ENCODE measurements at regions of chr13 and their contacts with region 1.

Region 1: GRCh38 chr13:32586080-32586900 is at the start of gene PDS5B:
- DNase-seq: peak; percentile 66
- ATAC-seq: peak; percentile 90
- H3K4me3 ChIP-seq: peak within 1 kb of the TSS; percentile 75
- H3K27ac ChIP-seq: peak within 1 kb of the TSS; percentile 84
- H3K4me1 ChIP-seq: peaks cover 4% of the 10 kb centered on the region; the same call in 1 of the 2 replicates
- H3K27me3 ChIP-seq: no peaks in the 10 kb centered on the region
- CTCF ChIP-seq: peak; percentile 68 to 96 (median 69); a peak in 4 of 6 replicates
- EP300 ChIP-seq: no peak
- POLR2A ChIP-seq: peak; percentile 71
- RAD21 ChIP-seq: peak; percentile 82
- polyA plus RNA-seq, gene PDS5B: 15.4 to 16.0 TPM

Region 2: DNA sequence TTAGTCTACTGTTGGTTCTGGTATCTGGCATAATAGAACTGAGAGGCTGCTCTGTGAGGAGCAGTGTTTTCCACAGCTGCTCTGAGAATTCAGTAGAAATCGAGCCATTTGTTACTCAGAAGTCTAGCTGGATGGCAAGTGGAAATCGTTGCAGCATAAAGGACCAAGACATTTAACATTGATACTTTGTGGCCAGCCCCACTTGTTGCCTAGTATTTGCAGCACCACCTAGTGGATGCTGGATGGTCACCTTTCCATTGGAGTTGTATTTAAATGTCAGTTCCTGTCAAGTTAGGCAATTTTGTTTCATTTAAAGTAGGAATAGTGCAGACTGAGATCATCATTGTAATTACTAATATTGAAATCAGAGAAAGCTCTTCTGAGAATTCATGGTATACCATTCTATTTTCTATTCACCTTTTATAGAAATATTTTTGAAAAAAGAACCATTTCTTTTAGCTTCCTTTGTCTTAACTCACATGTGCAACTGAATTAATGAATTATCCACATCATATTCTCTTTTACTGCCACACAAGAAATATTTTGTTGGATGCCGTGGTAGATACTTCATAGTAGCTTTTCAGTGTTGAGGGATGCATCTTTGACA is 64.5 kb after region 1 on chr13:
- CTCF ChIA-PET with region 1: interaction called, 171 read pairs
- POLR2A ChIA-PET with region 1: interaction called, 11 read pairs
- RAD21 ChIA-PET with region 1: interaction called, 112 read pairs
- SMC1A ChIA-PET with region 1: interaction called, 111 read pairs
- in situ Hi-C with region 1: no loop called
- intact Hi-C with region 1: loop called (anchors 1 kb)
- DNase-seq: peak; percentile 30
- ATAC-seq: peak; percentile 84
- H3K4me3 ChIP-seq: no peak overlapping the region
- H3K27ac ChIP-seq: no peak overlapping the region; the same call in 1 of the 2 replicates
- H3K4me1 ChIP-seq: peaks cover 20% of the 10 kb centered on the region
- H3K27me3 ChIP-seq: no peaks in the 10 kb centered on the region
- CTCF ChIP-seq: peak; percentile 78 to 88 (median 83)
- EP300 ChIP-seq: no peak
- POLR2A ChIP-seq: no peak
- RAD21 ChIP-seq: peak; percentile 71

Region 3: DNA sequence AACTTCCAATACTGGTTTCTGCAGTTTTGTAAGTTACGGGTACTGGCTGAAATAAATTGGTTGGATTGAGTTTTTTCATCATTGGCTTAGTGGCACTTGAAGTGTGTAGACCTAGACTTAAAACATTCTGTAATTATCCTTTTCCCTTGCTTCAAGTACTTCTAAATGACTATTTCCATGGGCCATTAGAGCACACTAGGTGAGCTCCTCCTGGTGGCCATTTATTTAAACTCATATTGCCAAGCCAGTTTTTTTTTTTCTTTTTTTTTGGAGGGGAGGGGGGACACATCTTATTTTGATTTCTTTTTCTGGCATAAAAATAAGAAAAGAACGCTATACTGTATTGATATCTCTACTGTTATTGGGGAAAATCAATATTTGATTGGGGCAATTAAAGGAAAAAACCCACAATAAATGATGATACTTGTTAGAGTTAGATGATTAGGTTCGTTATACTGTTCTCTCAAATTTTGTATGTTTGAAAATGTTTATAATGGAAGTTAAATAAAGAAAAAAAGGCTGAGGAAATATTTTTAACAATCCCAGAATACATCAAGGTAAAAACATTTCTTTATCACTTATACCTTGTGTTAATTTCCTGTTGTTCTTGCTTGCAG is 82.8 kb after region 1 on chr13:
- CTCF ChIA-PET with region 1: interaction called, 54 read pairs
- POLR2A ChIA-PET with region 1: no interaction called
- RAD21 ChIA-PET with region 1: interaction called, 30 read pairs
- SMC1A ChIA-PET with region 1: interaction called, 47 read pairs
- in situ Hi-C with region 1: no loop called
- intact Hi-C with region 1: loop called (anchors 1 kb)
- DNase-seq: no peak
- ATAC-seq: peak; percentile 78
- H3K4me3 ChIP-seq: no peak overlapping the region
- H3K27ac ChIP-seq: no peak overlapping the region
- H3K4me1 ChIP-seq: no peaks in the 10 kb centered on the region
- H3K27me3 ChIP-seq: no peaks in the 10 kb centered on the region
- CTCF ChIP-seq: peak; percentile 57 to 65 (median 58); a peak in 5 of 6 replicates
- EP300 ChIP-seq: no peak
- POLR2A ChIP-seq: no peak
- RAD21 ChIP-seq: peak; percentile 68

Region 4: DNA sequence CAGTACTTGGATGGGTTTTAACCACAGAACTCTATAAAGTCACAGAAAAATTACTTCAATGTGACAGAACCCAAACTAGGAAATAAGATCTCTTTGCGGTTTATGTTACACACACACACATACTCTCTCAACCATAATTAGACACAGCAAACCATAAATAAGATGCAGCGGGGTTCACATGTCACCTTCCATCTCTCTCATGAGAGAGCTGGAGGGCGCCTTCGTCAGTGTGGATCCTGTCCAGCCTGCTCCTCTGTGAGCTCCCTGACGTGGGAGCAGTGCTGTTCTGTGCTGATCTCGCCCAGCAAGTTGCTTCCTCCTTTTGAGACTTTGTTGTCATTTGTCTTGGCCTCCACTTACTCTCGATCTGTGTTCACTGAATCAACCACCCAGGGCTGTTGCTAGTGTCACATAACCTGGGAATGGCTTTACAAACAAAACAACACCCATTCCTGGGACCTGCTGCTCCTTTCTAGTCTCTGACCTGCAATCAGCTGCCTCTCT is 225.1 kb after region 1 on chr13:
- CTCF ChIA-PET with region 1: no interaction called
- POLR2A ChIA-PET with region 1: no interaction called
- RAD21 ChIA-PET with region 1: no interaction called
- SMC1A ChIA-PET with region 1: interaction called, 4 read pairs
- in situ Hi-C with region 1: no loop called
- intact Hi-C with region 1: loop called (anchors 10 kb)
- DNase-seq: peak; percentile 62
- ATAC-seq: peak; percentile 95
- H3K4me3 ChIP-seq: no peak overlapping the region
- H3K27ac ChIP-seq: peak overlapping the region; percentile 62
- H3K4me1 ChIP-seq: peaks cover 14% of the 10 kb centered on the region
- H3K27me3 ChIP-seq: no peaks in the 10 kb centered on the region
- CTCF ChIP-seq: no peak
- EP300 ChIP-seq: peak in 1 of 2 experiments; percentile 43; a peak in 1 of 4 replicates
- POLR2A ChIP-seq: peak; percentile 61
- RAD21 ChIP-seq: no peak

Region 5: GRCh38 chr13:33017323-33017929 is 431.1 kb after region 1 on chr13:
- CTCF ChIA-PET with region 1: interaction called, 8 read pairs
- POLR2A ChIA-PET with region 1: no interaction called
- RAD21 ChIA-PET with region 1: interaction called, 21 read pairs
- SMC1A ChIA-PET with region 1: interaction called, 14 read pairs
- in situ Hi-C with region 1: no loop called
- intact Hi-C with region 1: loop called (anchors 2 kb)
- DNase-seq: peak; percentile 65
- ATAC-seq: peak; percentile 88
- H3K4me3 ChIP-seq: peak overlapping the region; percentile 69
- H3K27ac ChIP-seq: no peak overlapping the region
- H3K4me1 ChIP-seq: peaks cover 12% of the 10 kb centered on the region
- H3K27me3 ChIP-seq: peaks cover 0 to 6% of the 10 kb centered on the region in 2 experiments; a peak in 1 of 4 replicates
- CTCF ChIP-seq: peak; percentile 66 to 82 (median 74); a peak in 5 of 6 replicates
- EP300 ChIP-seq: peak in 1 of 2 experiments; percentile 24; a peak in 1 of 4 replicates
- POLR2A ChIP-seq: no peak
- RAD21 ChIP-seq: peak; percentile 83